Activated T-helper 2 cell treated with anti-CD3 and anti-CD28 coated beads, Interferon-gamma antibody, Interleukin-2, Interleukin-4, amounts not matched to agents 10 μg/mL and 5 μg/mL and 100 μg/mL, durations not matched to agents 14 hours and 24 hours and 36 hours (primary cell): ENCODE measurements at regions of chr4 and their contacts with region 1.

Region 1: DNA sequence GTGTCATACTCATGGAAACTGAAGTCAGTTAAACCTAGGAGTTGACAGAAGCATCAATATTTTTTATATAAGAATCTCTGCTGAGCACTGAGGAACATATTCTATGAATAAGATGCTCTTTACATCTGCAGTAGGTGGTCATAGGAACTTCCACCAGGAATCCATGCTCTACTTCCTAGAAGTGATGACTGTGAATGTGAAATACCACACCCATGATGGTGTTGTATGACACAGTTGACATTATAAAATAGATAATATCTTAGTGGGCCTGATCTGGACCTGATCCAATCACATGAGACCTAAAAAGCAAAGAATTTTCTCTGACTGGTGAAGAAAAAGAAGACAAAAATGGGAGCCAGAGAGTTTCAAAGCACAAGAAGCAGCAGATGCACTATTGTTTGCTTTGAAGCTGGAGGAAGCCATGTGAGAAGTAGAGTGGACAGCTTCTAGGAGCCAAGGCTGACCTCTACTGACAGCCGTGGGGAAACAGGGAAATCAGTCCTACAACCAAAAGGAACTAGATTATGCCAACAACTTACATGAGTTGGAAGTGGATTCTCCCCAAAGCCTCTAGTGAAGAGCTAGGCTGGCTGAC is 68.6 kb upstream of the HS3ST1 start:
- DNase-seq: no peak
- H3K4me3 Mint-ChIP-seq: no peak overlapping the region
- H3K27ac Mint-ChIP-seq: peak overlapping the region; percentile 67
- H3K4me1 Mint-ChIP-seq: peaks cover 24% of the 10 kb centered on the region
- H3K27me3 Mint-ChIP-seq: peaks cover 6% of the 10 kb centered on the region

Region 2: DNA sequence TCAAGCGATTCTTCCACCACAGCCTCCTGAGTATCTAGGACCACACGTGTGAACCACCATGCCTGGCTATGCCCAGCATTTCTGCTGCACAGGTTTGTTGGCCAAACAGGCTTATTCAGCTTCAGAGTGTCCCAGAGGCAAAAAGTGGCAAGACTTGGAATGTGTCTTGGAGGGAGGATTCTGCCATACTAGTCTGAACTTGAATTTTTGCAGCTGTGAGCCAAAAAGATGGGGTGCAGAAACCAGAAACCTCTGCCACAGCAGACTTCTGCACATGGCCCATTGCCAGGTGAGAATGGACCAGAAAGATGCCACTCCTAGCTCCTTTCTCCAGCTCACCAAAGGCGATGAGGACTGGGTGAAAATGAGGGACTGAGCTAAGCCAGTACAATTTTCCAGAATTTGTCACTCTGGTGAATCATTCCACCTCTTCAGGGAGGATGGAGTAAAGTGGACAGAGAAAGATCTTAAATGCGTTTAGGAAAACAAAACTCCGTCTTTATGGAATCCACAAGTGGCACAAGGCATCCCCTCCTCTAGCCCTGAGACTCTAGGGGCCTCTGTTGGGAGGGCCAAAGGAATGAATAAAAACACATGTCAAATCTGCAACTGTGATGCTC is 443.6 kb before region 1 on chr4:
- intact Hi-C with region 1: no loop called
- DNase-seq: no peak
- H3K4me3 Mint-ChIP-seq: no peak overlapping the region
- H3K27ac Mint-ChIP-seq: no peak overlapping the region
- H3K4me1 Mint-ChIP-seq: no peaks in the 10 kb centered on the region
- H3K27me3 Mint-ChIP-seq: no peaks in the 10 kb centered on the region

Region 3: DNA sequence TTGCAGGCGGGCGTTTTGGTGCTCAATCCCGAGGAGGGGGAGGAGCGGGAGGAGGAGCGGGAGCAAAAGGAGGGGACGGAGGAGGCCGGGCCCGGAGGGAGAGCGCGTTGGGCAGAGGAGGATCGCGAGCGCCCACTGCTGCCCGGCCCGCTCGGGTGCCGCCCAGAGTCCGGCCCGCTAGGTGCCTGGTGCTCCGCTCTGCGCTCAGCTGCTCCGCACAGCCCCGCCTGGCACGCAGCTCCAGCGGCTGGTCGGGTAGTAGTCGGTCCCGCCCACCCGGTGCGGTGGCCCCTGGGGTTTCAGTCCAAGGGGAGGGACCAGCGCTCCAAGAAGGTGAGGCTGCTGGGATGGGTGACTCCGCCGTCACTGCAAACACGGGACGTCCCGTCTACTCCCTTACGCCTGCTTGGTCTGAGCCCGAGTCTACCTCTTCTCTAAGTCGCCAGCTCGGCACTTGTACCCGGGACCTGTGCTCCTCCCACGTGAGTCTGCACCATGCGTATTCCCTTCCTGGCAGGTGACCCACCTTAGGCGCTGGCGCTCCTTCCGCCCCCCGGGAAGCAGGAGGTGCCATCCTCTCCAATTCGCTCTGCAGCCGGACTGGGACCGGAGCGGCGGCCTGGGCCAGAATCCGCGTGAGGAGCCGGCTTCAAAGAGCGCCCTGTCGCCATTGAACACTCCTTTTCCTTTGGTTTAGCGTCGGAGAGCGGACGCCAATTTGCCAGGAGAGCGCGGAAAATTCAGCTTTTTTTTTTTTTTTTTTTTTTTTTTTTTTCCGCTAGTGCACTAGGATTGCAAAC is 68.2 kb before region 1 on chr4:
- intact Hi-C with region 1: loop called (anchors 2 kb)
- DNase-seq: peak; percentile 18
- H3K4me3 Mint-ChIP-seq: peak overlapping the region; percentile 82
- H3K27ac Mint-ChIP-seq: no peak overlapping the region
- H3K4me1 Mint-ChIP-seq: peaks cover 10% of the 10 kb centered on the region
- H3K27me3 Mint-ChIP-seq: peaks cover 65% of the 10 kb centered on the region

Region 4: GRCh38 chr4:11480683-11481082 is 16.6 kb before region 1 on chr4:
- intact Hi-C with region 1: loop called (anchors 2 kb)
- DNase-seq: no peak
- H3K4me3 Mint-ChIP-seq: no peak overlapping the region
- H3K27ac Mint-ChIP-seq: no peak overlapping the region
- H3K4me1 Mint-ChIP-seq: peaks cover 14% of the 10 kb centered on the region
- H3K27me3 Mint-ChIP-seq: peaks cover 2% of the 10 kb centered on the region

Region 5: DNA sequence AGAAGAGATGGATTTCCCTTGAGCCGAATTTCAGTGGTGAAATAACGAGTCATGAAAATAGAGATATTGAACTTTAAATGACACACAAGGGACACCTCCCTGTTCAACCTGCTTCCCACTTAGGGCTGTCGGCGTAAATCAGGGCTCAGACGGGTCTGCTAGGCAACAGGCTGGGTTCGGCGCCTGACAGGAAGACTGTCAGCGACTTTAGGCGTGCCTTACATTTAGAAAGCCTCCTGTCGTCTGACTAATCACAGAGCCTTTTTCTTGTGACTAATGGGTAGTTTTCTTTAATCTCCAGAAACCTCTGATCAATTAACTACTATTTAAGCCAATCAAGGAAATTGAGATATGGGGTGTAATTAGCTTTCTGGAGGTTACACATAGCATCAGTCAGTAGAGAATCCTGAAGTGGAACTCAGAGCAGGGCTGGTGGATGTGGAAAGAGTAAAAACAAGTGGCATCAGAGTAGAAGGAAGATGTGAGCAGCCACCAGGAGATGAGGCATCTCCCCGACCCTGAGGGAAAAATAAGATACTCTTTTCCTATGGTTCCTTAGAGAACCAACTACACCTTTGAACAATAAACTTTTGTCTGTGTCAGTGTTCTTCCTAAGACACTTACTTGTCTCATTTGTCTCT is 17.6 kb after region 1 on chr4:
- intact Hi-C with region 1: loop called (anchors 2 kb)
- DNase-seq: no peak
- H3K4me3 Mint-ChIP-seq: no peak overlapping the region
- H3K27ac Mint-ChIP-seq: no peak overlapping the region
- H3K4me1 Mint-ChIP-seq: peaks cover 30% of the 10 kb centered on the region
- H3K27me3 Mint-ChIP-seq: peaks cover 5% of the 10 kb centered on the region